ENCODE measurements at regions of chr3 and their contacts with region 1.

Region 1: GRCh38 chr3:120506828-120507774 is 56.3 kb upstream of the FSTL1 start:
- DNase-seq: peak; percentile 50
- H3K4me3 ChIP-seq: peak overlapping the region in 2 of 4 donors; percentile 1 to 18
- H3K27ac ChIP-seq: peak overlapping the region; percentile 8 to 68 (median 63)
- H3K4me1 ChIP-seq: peaks cover 10 to 20% (median 15%) of the 10 kb centered on the region in 4 donors
- H3K27me3 ChIP-seq: no peaks in the 10 kb centered on the region
- CTCF ChIP-seq: peak; percentile 60 to 75 (median 68)
- EP300 ChIP-seq: no peak
- POLR2A ChIP-seq: no peak

Region 2: GRCh38 chr3:120450600-120451271 is 56.4 kb before region 1 on chr3 and contains the start of gene FSTL1:
- in situ Hi-C with region 1: no loop called
- intact Hi-C with region 1: loop called (anchors 10 kb)
- DNase-seq: peak; percentile 43
- H3K4me3 ChIP-seq: peak within 1 kb of the TSS; percentile 56 to 89 (median 76)
- H3K27ac ChIP-seq: peak within 1 kb of the TSS; percentile 86 to 97 (median 92)
- H3K4me1 ChIP-seq: peaks cover 9 to 40% (median 19%) of the 10 kb centered on the region in 4 donors
- H3K27me3 ChIP-seq: peaks cover 11% of the 10 kb centered on the region
- CTCF ChIP-seq: no peak
- EP300 ChIP-seq: no peak
- POLR2A ChIP-seq: peak; percentile 65
- total RNA-seq, gene FSTL1: 81.2 to 106 (median 91.8) TPM

Measured in transverse colon (tissue), 4 donors.